ENCODE measurements at regions of chr10 and their contacts with region 1.

Region 1: DNA sequence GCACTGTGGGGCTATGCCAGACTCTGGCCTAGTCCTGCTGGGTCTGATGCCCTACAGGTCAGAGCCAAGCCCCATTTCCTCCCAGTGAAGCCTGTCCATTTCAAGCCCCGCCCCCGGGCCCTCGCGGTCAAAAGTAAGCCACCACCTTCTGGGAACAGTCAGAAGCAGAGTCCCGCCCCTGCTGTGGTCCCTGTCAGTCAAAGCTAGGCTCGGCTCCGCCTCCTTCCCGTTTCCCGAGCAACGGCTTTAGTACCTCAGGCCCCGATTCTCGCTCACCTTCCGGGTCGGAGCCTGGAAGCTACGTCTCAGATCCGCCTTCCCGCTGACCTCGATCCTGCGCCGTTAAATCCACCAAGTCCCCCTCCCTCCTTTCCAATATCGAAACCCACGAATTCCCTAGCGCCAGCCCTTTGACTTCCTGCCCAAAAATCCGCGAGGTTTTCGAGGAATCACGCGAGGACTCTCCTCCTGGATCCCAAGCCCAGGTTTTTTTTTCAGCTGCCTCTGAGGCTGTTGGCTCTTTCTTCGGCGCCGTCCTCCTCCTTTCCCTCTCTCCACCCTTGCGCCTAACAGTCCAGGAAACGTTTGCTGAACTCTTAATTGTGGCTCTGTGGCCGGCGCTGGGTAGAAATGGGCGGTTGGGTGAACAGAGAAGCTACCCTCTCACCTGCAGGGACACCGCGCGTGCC is 11.8 kb downstream of the SFXN3 start:
- DNase-seq: peak; percentile 83
- ATAC-seq: peak; percentile 96
- H3K4me3 ChIP-seq: peak overlapping the region; percentile 63
- H3K27ac ChIP-seq: peak overlapping the region; percentile 7; the same call in 1 of the 2 replicates
- H3K4me1 ChIP-seq: peaks cover 5% of the 10 kb centered on the region; the same call in 1 of the 2 replicates
- H3K27me3 ChIP-seq: no peaks in the 10 kb centered on the region; a peak in 1 of 4 replicates
- CTCF ChIP-seq: no peak
- EP300 ChIP-seq: no peak
- POLR2A ChIP-seq: peak; percentile 87
- RAD21 ChIP-seq: no peak

Region 2: GRCh38 chr10:101005869-101006567 is 36.8 kb before region 1 on chr10:
- CTCF ChIA-PET with region 1: no interaction called
- POLR2A ChIA-PET with region 1: no interaction called
- RAD21 ChIA-PET with region 1: no interaction called
- SMC1A ChIA-PET with region 1: no interaction called
- in situ Hi-C with region 1: no loop called
- intact Hi-C with region 1: no loop called
- DNase-seq: no peak
- ATAC-seq: no peak
- H3K4me3 ChIP-seq: no peak overlapping the region
- H3K27ac ChIP-seq: no peak overlapping the region
- H3K4me1 ChIP-seq: peaks cover 4% of the 10 kb centered on the region; the same call in 1 of the 2 replicates
- H3K27me3 ChIP-seq: no peaks in the 10 kb centered on the region
- CTCF ChIP-seq: no peak
- EP300 ChIP-seq: no peak
- POLR2A ChIP-seq: no peak
- RAD21 ChIP-seq: no peak

Region 3: DNA sequence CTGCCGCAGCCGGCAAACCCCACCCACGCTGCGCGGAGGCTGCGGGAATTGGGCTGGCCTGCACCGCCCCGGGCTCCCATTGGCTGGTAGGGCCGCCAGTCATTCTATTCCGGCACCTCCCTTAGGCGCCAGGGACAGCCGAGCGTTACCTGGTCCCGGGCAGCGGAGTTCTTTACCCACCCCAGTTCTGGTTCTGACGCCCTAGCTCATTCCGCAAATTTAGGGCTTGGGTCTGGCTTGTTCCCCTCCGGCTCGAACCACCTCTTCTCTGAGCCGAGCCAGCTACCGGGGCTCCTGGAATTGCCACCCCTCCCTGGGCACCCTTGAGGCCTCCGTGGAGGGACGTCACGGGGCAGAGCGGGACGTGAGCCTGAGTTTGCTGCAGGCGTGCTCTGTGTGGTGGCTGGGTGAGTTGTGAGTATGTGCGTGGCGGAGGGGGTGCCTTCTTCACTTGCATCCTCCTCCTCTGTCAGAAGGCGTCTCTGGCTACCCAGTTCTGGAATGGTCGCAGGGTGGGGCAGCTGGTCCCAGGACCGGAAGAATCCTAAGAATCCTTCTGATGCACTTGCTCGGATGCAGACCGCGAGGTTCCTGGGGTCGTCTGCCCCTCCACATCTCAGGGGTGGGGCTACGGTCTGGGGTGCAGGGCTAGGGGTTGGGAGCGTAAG is 11.5 kb before region 1 on chr10 and contains the starts of genes PDZD7 and SFXN3:
- CTCF ChIA-PET with region 1: interaction called, 40 read pairs
- POLR2A ChIA-PET with region 1: interaction called, 8 read pairs
- RAD21 ChIA-PET with region 1: interaction called, 5 read pairs
- SMC1A ChIA-PET with region 1: interaction called, 24 read pairs
- in situ Hi-C with region 1: no loop called
- intact Hi-C with region 1: no loop called
- DNase-seq: peak; percentile 48
- ATAC-seq: peak; percentile 96
- H3K4me3 ChIP-seq: peak within 1 kb of the TSS; percentile 64
- H3K27ac ChIP-seq: no peak within 1 kb of the TSS
- H3K4me1 ChIP-seq: peaks cover 21% of the 10 kb centered on the region
- H3K27me3 ChIP-seq: peaks cover 5 to 9% of the 10 kb centered on the region in 2 experiments
- CTCF ChIP-seq: no peak
- EP300 ChIP-seq: no peak
- POLR2A ChIP-seq: no peak
- RAD21 ChIP-seq: no peak
- polyA plus RNA-seq, gene PDZD7: not detected
- polyA plus RNA-seq, gene SFXN3: 0.05 to 0.44 TPM

Region 4: GRCh38 chr10:101060036-101060950 is 17.5 kb after region 1 on chr10:
- CTCF ChIA-PET with region 1: interaction called, 885 read pairs
- POLR2A ChIA-PET with region 1: interaction called, 42 read pairs
- RAD21 ChIA-PET with region 1: interaction called, 70 read pairs
- SMC1A ChIA-PET with region 1: interaction called, 45 read pairs
- in situ Hi-C with region 1: no loop called
- intact Hi-C with region 1: no loop called
- DNase-seq: peak; percentile 81
- ATAC-seq: peak; percentile 54
- H3K4me3 ChIP-seq: peak overlapping the region; percentile 95
- H3K27ac ChIP-seq: peak overlapping the region; percentile 98
- H3K4me1 ChIP-seq: peaks cover 31% of the 10 kb centered on the region
- H3K27me3 ChIP-seq: peaks cover 0 to 3% of the 10 kb centered on the region in 2 experiments; a peak in 1 of 4 replicates
- CTCF ChIP-seq: peak; percentile 87 to 92 (median 92)
- EP300 ChIP-seq: no peak
- POLR2A ChIP-seq: no peak; the same call in 1 of the 2 replicates
- RAD21 ChIP-seq: peak; percentile 83

Region 5: GRCh38 chr10:101067356-101068083 is 24.7 kb after region 1 on chr10:
- CTCF ChIA-PET with region 1: interaction called, 885 read pairs
- POLR2A ChIA-PET with region 1: interaction called, 42 read pairs
- RAD21 ChIA-PET with region 1: interaction called, 70 read pairs
- SMC1A ChIA-PET with region 1: interaction called, 35 read pairs
- in situ Hi-C with region 1: no loop called
- intact Hi-C with region 1: loop called (anchors 1 kb)
- DNase-seq: peak; percentile 44
- ATAC-seq: peak; percentile 74
- H3K4me3 ChIP-seq: peak overlapping the region; percentile 87
- H3K27ac ChIP-seq: no peak overlapping the region
- H3K4me1 ChIP-seq: peaks cover 41% of the 10 kb centered on the region
- H3K27me3 ChIP-seq: peaks cover 2 to 3% of the 10 kb centered on the region in 2 experiments; a peak in 1 of 4 replicates
- CTCF ChIP-seq: peak; percentile 81 to 89 (median 82)
- EP300 ChIP-seq: no peak
- POLR2A ChIP-seq: no peak
- RAD21 ChIP-seq: peak; percentile 73

Region 6: GRCh38 chr10:101101372-101101881 is 58.6 kb after region 1 on chr10:
- CTCF ChIA-PET with region 1: interaction called, 18 read pairs
- POLR2A ChIA-PET with region 1: no interaction called
- RAD21 ChIA-PET with region 1: interaction called, 10 read pairs
- SMC1A ChIA-PET with region 1: interaction called, 7 read pairs
- in situ Hi-C with region 1: no loop called
- intact Hi-C with region 1: no loop called
- DNase-seq: no peak
- ATAC-seq: no peak
- H3K4me3 ChIP-seq: no peak overlapping the region
- H3K27ac ChIP-seq: no peak overlapping the region
- H3K4me1 ChIP-seq: no peaks in the 10 kb centered on the region
- H3K27me3 ChIP-seq: peaks cover 0 to 2% of the 10 kb centered on the region in 2 experiments; a peak in 2 of 4 replicates
- CTCF ChIP-seq: no peak
- EP300 ChIP-seq: no peak
- POLR2A ChIP-seq: no peak
- RAD21 ChIP-seq: no peak

Measured in GM12878 (cell line).